Endothelial cell of umbilical vein (primary cell): ENCODE measurements at regions of chr12 and their contacts with region 1.

Region 1: DNA sequence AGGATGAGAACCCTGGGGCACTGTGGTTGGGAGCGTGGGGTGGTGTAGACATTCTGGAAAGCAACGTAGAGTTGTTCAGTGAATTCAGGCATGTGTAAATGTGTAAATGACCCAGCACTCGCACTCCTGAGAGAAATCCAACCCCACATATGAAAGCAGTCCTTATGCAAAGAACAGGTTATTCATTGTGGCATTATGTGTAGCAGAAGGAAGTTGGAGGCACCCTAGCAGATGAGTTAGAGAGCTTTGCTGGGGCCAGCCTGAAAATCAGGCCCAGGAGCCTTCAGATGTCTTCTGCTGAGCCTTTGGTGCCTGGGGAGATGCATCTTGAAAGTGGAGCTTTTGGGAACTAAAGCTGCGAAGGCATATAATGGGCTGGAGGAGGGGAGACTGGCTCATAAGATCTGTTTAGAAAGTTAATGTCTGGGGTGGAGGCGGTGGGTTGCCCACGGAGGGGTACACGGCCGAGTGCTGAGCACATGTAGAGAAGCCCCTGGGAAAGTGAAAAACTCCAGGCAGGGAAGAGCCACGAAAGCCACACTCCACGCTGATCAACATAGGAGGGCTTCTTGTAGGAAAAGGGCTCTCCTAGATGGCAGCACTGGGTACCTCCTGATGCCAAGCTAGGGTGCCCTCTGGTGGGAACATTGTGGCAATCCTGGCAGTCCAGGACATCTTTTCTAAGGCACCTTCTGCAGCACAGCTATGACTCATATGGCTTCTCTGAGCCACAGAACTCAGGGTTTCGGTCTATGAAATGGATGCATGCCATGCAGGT is 6.0 kb upstream of the KRT83 start:
- DNase-seq: peak; percentile 93
- H3K4me3 ChIP-seq: no peak overlapping the region
- H3K27ac ChIP-seq: no peak overlapping the region
- H3K4me1 ChIP-seq: no peaks in the 10 kb centered on the region
- H3K27me3 ChIP-seq: peaks cover 33 to 41% of the 10 kb centered on the region in 2 experiments
- CTCF ChIP-seq: peak; percentile 95 to 96
- POLR2A ChIP-seq: no peak

Region 2: GRCh38 chr12:52147367-52147972 is 179.8 kb before region 1 on chr12:
- CTCF ChIA-PET with region 1: interaction called, 62 read pairs
- POLR2A ChIA-PET with region 1: interaction called, 3 read pairs
- dilution Hi-C with region 1: no loop called
- intact Hi-C with region 1: loop called (anchors 1 kb)
- DNase-seq: peak; percentile 91
- H3K4me3 ChIP-seq: no peak overlapping the region
- H3K27ac ChIP-seq: peak overlapping the region; percentile 98
- H3K4me1 ChIP-seq: peaks cover 23% of the 10 kb centered on the region
- H3K27me3 ChIP-seq: no peaks in the 10 kb centered on the region
- CTCF ChIP-seq: no peak
- POLR2A ChIP-seq: peak; percentile 65

Region 3: GRCh38 chr12:52213512-52214420 is 113.5 kb before region 1 on chr12:
- CTCF ChIA-PET with region 1: interaction called, 6 read pairs
- POLR2A ChIA-PET with region 1: no interaction called
- dilution Hi-C with region 1: no loop called
- intact Hi-C with region 1: loop called (anchors 1 kb)
- DNase-seq: peak; percentile 90
- H3K4me3 ChIP-seq: no peak overlapping the region
- H3K27ac ChIP-seq: no peak overlapping the region
- H3K4me1 ChIP-seq: peaks cover 33% of the 10 kb centered on the region
- H3K27me3 ChIP-seq: no peaks in the 10 kb centered on the region
- CTCF ChIP-seq: peak; percentile 100
- POLR2A ChIP-seq: no peak

Region 4: GRCh38 chr12:52230327-52231291 is 96.6 kb before region 1 on chr12:
- CTCF ChIA-PET with region 1: interaction called, 8 read pairs
- POLR2A ChIA-PET with region 1: no interaction called
- dilution Hi-C with region 1: no loop called
- intact Hi-C with region 1: loop called (anchors 5 kb)
- DNase-seq: peak; percentile 84
- H3K4me3 ChIP-seq: no peak overlapping the region
- H3K27ac ChIP-seq: peak overlapping the region; percentile 84
- H3K4me1 ChIP-seq: peaks cover 44% of the 10 kb centered on the region
- H3K27me3 ChIP-seq: no peaks in the 10 kb centered on the region
- CTCF ChIP-seq: no peak
- POLR2A ChIP-seq: peak; percentile 1

Region 5: DNA sequence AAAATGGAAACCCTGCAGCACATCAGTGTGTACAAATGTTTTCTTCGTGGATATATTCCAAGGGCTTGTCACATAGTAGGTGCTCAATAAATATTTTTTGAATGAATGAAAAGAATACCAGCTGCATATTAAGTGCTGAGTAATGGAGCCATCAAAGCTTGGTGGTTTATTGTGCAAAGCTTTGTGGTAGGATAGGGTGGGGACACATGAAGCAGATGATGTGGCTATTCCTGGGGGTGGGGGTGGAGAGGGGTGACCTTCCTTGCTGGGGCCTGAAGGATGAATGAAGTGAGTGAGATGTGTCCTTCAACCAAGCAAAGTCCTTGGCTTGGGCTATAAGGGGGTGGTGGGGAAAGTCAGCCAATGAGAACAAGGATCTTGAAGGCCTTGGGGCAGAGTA is 31.6 kb before region 1 on chr12:
- CTCF ChIA-PET with region 1: no interaction called
- POLR2A ChIA-PET with region 1: no interaction called
- dilution Hi-C with region 1: no loop called
- intact Hi-C with region 1: loop called (anchors 1 kb)
- DNase-seq: no peak
- H3K4me3 ChIP-seq: no peak overlapping the region
- H3K27ac ChIP-seq: no peak overlapping the region
- H3K4me1 ChIP-seq: no peaks in the 10 kb centered on the region
- H3K27me3 ChIP-seq: peaks cover 39 to 58% of the 10 kb centered on the region in 2 experiments
- CTCF ChIP-seq: no peak
- POLR2A ChIP-seq: no peak

Region 6: GRCh38 chr12:52313926-52314325 is 13.3 kb before region 1 on chr12:
- CTCF ChIA-PET with region 1: interaction called, 32 read pairs
- POLR2A ChIA-PET with region 1: no interaction called
- dilution Hi-C with region 1: no loop called
- intact Hi-C with region 1: no loop called
- DNase-seq: no peak
- H3K4me3 ChIP-seq: no peak overlapping the region
- H3K27ac ChIP-seq: no peak overlapping the region
- H3K4me1 ChIP-seq: no peaks in the 10 kb centered on the region
- H3K27me3 ChIP-seq: peaks cover 37 to 43% of the 10 kb centered on the region in 2 experiments
- CTCF ChIP-seq: no peak
- POLR2A ChIP-seq: no peak

Region 7: GRCh38 chr12:52461691-52462090 is 134.4 kb after region 1 on chr12:
- CTCF ChIA-PET with region 1: no interaction called
- POLR2A ChIA-PET with region 1: no interaction called
- dilution Hi-C with region 1: no loop called
- intact Hi-C with region 1: no loop called
- DNase-seq: no peak
- H3K4me3 ChIP-seq: no peak overlapping the region
- H3K27ac ChIP-seq: no peak overlapping the region
- H3K4me1 ChIP-seq: no peaks in the 10 kb centered on the region
- H3K27me3 ChIP-seq: peaks cover 6 to 7% of the 10 kb centered on the region in 2 experiments
- CTCF ChIP-seq: no peak
- POLR2A ChIP-seq: no peak

Region 8: DNA sequence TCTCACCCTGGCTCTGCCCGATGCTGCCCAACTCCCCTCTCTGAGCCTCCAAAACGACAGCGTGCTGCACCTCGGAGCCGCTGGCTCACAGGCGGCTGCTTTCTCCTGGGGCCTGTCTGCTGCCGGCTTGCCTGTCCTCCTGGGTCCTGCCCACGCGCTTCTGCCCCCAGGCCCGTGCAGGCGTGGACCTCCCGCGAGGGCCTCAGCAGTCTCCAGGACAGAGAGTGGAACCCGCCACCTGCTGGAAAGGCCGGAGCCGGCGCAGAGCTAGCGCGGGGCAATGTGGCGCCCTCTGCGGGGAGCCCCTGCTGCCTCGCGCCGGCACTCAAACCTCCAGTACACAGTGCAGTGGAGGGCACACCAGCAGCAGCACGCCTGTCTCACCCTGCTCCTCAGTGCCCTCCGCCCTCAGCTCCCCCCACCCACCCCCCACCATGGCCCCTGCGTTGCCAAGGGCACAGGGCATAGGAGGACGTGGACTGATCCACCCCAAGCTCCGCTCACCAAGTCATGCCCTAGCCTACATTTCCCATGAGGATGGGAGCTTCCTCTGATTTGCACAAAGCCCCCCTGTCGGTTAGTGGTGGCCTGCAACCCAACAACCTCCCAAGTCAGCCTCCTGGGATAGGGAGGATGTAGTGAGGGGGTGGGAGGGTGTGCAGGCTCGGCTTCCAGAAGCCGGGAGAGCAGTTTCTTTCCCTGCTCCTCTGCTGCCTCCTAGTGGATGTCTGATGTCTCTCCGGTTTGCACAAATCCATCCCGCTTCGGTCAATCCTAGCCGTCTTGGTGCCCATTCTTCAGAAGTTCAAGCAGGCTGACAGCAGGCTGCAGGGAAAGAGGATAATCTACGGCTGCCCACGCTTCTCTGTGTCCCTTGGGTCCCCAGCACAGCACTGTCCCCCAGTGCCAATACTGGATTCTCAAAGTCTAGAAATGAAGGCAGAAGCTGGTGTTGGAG is 552.4 kb after region 1 on chr12:
- CTCF ChIA-PET with region 1: interaction called, 19 read pairs
- POLR2A ChIA-PET with region 1: no interaction called
- dilution Hi-C with region 1: no loop called
- intact Hi-C with region 1: no loop called
- DNase-seq: peak; percentile 83
- H3K4me3 ChIP-seq: peak overlapping the region in 1 of 3 experiments; percentile 23
- H3K27ac ChIP-seq: no peak overlapping the region
- H3K4me1 ChIP-seq: peaks cover 2% of the 10 kb centered on the region
- H3K27me3 ChIP-seq: no peaks in the 10 kb centered on the region
- CTCF ChIP-seq: peak; percentile 77 to 99
- POLR2A ChIP-seq: no peak